CD8-positive, alpha-beta memory T cell (primary cell): ENCODE measurements at regions of chr1 and their contacts with region 1.

Region 1: DNA sequence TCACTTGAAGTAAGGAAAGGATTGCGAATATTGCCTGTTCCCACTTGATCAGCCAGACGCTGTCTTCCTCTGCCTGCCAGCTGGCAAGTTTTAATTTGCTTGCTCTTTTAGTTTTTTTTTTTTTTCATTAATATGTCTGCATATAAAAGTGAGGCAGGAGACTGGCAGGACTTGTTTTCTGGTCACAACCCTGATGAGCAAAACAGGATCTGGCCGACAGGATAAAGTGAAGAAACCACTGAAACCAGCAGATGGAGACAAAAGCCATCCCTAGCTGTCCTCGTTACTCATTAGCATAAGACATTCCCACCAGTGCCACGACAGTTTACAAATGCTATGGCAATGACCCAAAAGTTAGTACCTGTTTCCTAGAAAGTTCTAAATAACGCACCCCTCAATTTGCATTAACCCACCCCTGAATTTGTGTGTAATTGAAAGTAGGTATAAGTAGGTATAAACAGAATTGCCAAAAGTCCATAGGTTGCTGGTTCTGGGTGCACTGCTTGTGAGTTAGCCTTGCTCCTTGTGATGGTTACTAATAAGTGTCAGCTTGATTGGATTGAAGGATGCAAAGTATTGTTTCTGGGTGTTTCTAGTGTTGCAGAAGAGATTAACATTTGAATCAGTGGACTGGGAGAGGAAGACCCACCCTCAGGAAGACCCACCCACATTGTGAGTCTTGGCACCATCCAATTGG is 60.8 kb downstream of the ZNF684 start:
- DNase-seq: no peak
- H3K4me3 ChIP-seq: no peak overlapping the region
- H3K4me3 Mint-ChIP-seq: no peak overlapping the region
- H3K27ac ChIP-seq: no peak overlapping the region
- H3K27ac Mint-ChIP-seq: peak overlapping the region in 1 of 8 donors; percentile 14
- H3K4me1 ChIP-seq: no peaks in the 10 kb centered on the region
- H3K4me1 Mint-ChIP-seq: peaks cover 3 to 7% (median 4%) of the 10 kb centered on the region in 3 donors
- H3K27me3 ChIP-seq: no peaks in the 10 kb centered on the region
- H3K27me3 Mint-ChIP-seq: peaks cover 4 to 7% of the 10 kb centered on the region in 2 donors

Region 2: GRCh38 chr1:40638097-40639036 is 46.1 kb after region 1 on chr1:
- CTCF ChIA-PET with region 1: no interaction called
- POLR2A ChIA-PET with region 1: interaction called, 11 read pairs
- DNase-seq: no peak
- H3K4me3 ChIP-seq: no peak overlapping the region
- H3K4me3 Mint-ChIP-seq: no peak overlapping the region
- H3K27ac ChIP-seq: no peak overlapping the region
- H3K27ac Mint-ChIP-seq: peak overlapping the region in 3 of 8 donors; percentile 14 to 71 (median 70)
- H3K4me1 ChIP-seq: no peaks in the 10 kb centered on the region
- H3K4me1 Mint-ChIP-seq: peaks cover 7 to 23% (median 13%) of the 10 kb centered on the region in 3 donors
- H3K27me3 ChIP-seq: no peaks in the 10 kb centered on the region
- H3K27me3 Mint-ChIP-seq: peaks cover 0 to 1% of the 10 kb centered on the region in 2 donors